Panc1 (cell line): ENCODE measurements at regions of chr9 and their contacts with region 1.

Region 1: GRCh38 chr9:35882263-35882848 is 12.2 kb upstream of the OR13J1 start:
- DNase-seq: peak; percentile 72
- ATAC-seq: peak; percentile 99
- H3K4me3 ChIP-seq: no peak overlapping the region
- H3K27ac ChIP-seq: no peak overlapping the region
- H3K4me1 ChIP-seq: peaks cover 5% of the 10 kb centered on the region; the same call in 1 of the 2 replicates
- H3K27me3 ChIP-seq: no peaks in the 10 kb centered on the region; the same call in 1 of the 2 replicates
- CTCF ChIP-seq: peak; percentile 99

Region 2: GRCh38 chr9:35774907-35775635 is 107.3 kb before region 1 on chr9:
- CTCF ChIA-PET with region 1: interaction called, 11 read pairs
- POLR2A ChIA-PET with region 1: no interaction called
- in situ Hi-C with region 1: no loop called
- intact Hi-C with region 1: no loop called
- DNase-seq: no peak
- ATAC-seq: peak; percentile 28; the same call in 1 of the 2 replicates
- H3K4me3 ChIP-seq: no peak overlapping the region
- H3K27ac ChIP-seq: no peak overlapping the region
- H3K4me1 ChIP-seq: peaks cover 8% of the 10 kb centered on the region
- H3K27me3 ChIP-seq: no peaks in the 10 kb centered on the region
- CTCF ChIP-seq: no peak

Region 3: DNA sequence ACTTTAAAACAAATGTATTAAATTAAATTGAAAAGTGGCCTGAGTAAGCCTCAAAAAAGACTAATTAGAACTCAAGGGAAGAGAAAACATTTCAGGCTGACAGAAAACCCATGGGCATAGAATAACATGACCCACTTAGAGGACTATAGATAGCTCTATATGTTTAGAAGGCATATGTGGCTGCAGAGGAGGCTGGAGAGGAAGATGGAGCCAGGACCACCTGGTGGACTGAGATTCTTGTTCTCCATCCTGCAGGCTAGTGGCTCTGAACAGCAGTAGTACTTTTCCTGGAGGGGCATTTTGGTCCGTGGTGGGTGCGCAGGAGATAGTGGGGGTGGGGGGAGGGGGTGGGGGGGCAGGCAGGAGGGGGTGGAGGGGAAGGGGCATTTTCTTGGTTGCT is 101.3 kb before region 1 on chr9:
- CTCF ChIA-PET with region 1: no interaction called
- POLR2A ChIA-PET with region 1: interaction called, 10 read pairs
- in situ Hi-C with region 1: no loop called
- intact Hi-C with region 1: no loop called
- DNase-seq: no peak
- ATAC-seq: no peak
- H3K4me3 ChIP-seq: no peak overlapping the region
- H3K27ac ChIP-seq: no peak overlapping the region
- H3K4me1 ChIP-seq: no peaks in the 10 kb centered on the region
- H3K27me3 ChIP-seq: no peaks in the 10 kb centered on the region
- CTCF ChIP-seq: no peak

Region 4: GRCh38 chr9:35790385-35791296 is 91.7 kb before region 1 on chr9:
- CTCF ChIA-PET with region 1: interaction called, 18 read pairs
- POLR2A ChIA-PET with region 1: no interaction called
- in situ Hi-C with region 1: no loop called
- intact Hi-C with region 1: loop called (anchors 1 kb)
- DNase-seq: no peak
- ATAC-seq: peak; percentile 96
- H3K4me3 ChIP-seq: no peak overlapping the region
- H3K27ac ChIP-seq: no peak overlapping the region
- H3K4me1 ChIP-seq: 0 out of 2 replicates have a peak, but pooled peaks cover 3% of the 10 kb centered on the region
- H3K27me3 ChIP-seq: no peaks in the 10 kb centered on the region
- CTCF ChIP-seq: peak; percentile 94

Region 5: GRCh38 chr9:35826071-35826701 is 56.2 kb before region 1 on chr9:
- CTCF ChIA-PET with region 1: interaction called, 22 read pairs
- POLR2A ChIA-PET with region 1: no interaction called
- in situ Hi-C with region 1: no loop called
- intact Hi-C with region 1: loop called (anchors 1 kb)
- DNase-seq: peak; percentile 57
- ATAC-seq: peak; percentile 62
- H3K4me3 ChIP-seq: no peak overlapping the region
- H3K27ac ChIP-seq: no peak overlapping the region
- H3K4me1 ChIP-seq: peaks cover 4% of the 10 kb centered on the region; the same call in 1 of the 2 replicates
- H3K27me3 ChIP-seq: no peaks in the 10 kb centered on the region
- CTCF ChIP-seq: peak; percentile 91

Region 6: DNA sequence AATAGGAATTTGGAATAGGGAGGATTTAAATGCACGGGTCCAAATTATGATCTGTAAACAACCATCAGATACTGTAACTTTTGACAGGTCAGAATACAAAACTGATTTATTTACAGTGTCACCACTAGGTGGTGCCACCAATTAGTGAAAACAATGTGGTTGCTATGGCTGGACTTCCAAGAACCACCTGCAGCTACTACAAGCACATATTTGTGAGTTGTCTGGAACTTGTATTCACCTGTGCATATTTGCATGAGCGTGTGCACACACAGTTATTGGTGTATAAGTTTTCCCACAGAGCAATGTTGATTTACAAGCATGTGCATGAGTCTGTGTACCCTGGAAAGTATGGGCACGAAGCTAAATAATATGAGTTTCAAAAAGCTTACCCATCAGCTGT is 20.7 kb after region 1 on chr9:
- CTCF ChIA-PET with region 1: interaction called, 18 read pairs
- POLR2A ChIA-PET with region 1: no interaction called
- in situ Hi-C with region 1: no loop called
- intact Hi-C with region 1: no loop called
- DNase-seq: no peak
- ATAC-seq: peak; percentile 47
- H3K4me3 ChIP-seq: no peak overlapping the region
- H3K27ac ChIP-seq: no peak overlapping the region
- H3K4me1 ChIP-seq: peaks cover 50% of the 10 kb centered on the region
- H3K27me3 ChIP-seq: 0 out of 2 replicates have a peak, but pooled peaks cover 2% of the 10 kb centered on the region
- CTCF ChIP-seq: no peak